Gastrocnemius medialis (tissue), 4 donors: ENCODE measurements at regions of chr5 and their contacts with region 1.

Region 1: DNA sequence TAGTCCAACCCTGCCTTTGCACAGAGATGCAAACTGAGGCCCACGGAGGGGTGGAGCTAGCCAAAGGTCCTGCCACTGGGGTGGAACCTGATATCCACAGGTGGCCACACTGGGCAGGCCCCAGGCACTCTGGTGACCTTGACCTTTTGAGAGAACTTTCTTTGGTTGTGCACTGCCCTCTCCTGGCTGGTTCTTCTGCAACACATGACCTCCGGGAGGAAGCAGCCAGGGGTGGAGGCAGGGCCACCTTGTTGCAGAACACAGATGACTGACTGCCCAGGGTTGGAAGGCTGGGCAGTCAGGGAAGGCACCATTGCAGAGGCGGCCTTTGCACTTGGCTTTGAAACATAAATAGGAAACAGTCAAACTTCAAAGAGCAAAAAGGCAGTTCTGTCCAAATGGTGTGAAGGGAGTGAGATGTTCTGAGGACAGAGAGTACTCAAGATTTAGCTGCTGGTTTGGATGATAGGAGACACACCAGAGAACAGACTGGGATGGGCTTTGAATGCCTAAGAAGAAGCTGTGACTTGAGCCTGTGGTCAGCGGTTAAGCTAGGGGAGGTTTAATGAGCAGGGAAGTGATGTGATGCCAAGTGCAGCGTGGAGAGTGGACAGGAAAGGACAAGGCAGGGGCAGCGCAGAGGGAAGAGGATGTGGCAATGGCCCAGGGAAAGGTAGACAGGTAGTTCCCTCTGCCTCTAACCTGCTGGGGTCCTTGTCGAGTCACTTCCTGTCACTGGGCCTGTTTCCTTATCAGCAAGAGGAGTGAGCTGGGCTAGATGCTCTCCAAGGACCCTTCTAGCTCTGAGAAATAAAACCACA is 6.8 kb upstream of the TCOF1 start:
- DNase-seq: peak; percentile 64 to 92
- ATAC-seq: peak; percentile 92 to 99
- H3K4me3 ChIP-seq: no peak overlapping the region
- H3K27ac ChIP-seq: peak overlapping the region in 2 of 4 donors; percentile 8 to 44
- H3K4me1 ChIP-seq: peaks cover 5 to 6% of the 10 kb centered on the region in 2 donors
- H3K27me3 ChIP-seq: no peaks in the 10 kb centered on the region
- CTCF ChIP-seq: peak; percentile 43 to 68 (median 58)
- POLR2A ChIP-seq: no peak

Region 2: GRCh38 chr5:150058480-150059126 is 292.1 kb before region 1 on chr5:
- in situ Hi-C with region 1: no loop called
- intact Hi-C with region 1: no loop called
- DNase-seq: peak in 1 of 2 donors; percentile 21
- ATAC-seq: peak in 1 of 2 donors; percentile 42
- H3K4me3 ChIP-seq: no peak overlapping the region
- H3K27ac ChIP-seq: no peak overlapping the region
- H3K4me1 ChIP-seq: no peaks in the 10 kb centered on the region
- H3K27me3 ChIP-seq: no peaks in the 10 kb centered on the region
- CTCF ChIP-seq: no peak
- POLR2A ChIP-seq: no peak

Region 3: DNA sequence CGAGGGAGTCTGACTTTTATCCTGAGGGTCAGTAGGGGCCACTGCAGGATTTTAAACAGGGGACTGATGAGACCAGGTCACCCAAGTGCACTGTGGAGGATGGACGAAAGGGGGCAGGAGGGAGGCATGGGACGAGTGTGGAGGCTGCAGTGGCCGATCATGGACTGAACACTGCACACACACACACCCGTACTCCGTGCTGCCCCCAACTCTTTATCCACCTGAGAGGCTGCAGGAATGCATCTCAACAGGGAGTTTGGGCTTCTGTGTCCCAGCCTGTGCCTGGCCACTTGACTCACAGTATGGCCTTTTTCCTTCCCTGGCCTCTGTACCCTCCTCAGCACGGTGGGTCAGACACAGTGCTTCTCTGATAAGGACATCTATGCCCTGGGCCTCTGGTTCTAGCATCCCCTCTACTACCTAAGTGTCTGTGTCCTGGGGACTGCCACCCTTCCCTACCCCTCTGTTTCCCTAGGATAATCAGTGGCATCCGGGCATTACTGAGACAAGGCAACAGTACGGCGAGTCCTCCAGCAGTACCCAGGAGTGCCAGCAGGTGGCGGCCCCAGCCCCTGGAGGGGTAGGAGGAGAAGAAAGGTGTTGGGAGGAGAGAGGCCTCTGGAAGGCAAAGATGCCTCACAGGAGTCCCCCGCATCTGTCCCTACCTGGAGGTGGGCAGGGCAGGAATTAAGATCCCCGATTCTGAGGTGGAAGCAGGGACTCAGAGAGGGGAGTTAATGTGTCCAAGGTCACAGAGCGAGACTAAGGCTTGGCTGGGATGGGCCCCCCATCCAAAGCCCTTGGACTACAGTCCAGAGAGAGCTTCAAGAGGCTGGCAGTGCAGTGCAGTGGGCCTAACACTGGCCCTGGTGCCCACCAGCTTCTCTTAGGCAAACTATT is 189.2 kb before region 1 on chr5:
- in situ Hi-C with region 1: no loop called
- intact Hi-C with region 1: loop called (anchors 2 kb)
- DNase-seq: peak; percentile 58 to 82
- ATAC-seq: peak; percentile 60 to 83
- H3K4me3 ChIP-seq: no peak overlapping the region
- H3K27ac ChIP-seq: peak overlapping the region; percentile 76 to 84 (median 82)
- H3K4me1 ChIP-seq: peaks cover 20 to 25% of the 10 kb centered on the region in 2 donors
- H3K27me3 ChIP-seq: no peaks in the 10 kb centered on the region
- CTCF ChIP-seq: peak; percentile 95 to 98 (median 97)
- POLR2A ChIP-seq: no peak

Region 4: DNA sequence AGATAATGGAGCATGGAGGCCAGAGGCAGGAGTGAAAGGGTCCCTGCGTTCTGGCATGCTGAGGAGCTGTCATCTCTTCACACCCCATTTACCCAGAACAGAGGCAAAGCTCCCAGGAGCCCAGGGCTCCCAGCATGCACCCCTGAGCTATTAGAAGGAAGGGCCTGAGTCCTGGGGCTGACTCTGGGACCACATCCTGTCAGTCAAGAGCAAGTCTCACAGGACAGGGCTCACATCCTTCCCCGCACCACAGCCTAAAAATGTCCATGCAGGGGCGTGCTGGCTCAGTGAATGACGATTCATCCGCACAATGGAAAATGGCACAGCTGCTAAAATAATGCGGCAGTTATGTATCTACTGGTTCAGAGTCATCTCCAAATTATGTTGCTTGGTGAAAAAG is 92.6 kb before region 1 on chr5:
- in situ Hi-C with region 1: no loop called
- intact Hi-C with region 1: loop called (anchors 5 kb)
- DNase-seq: no peak
- ATAC-seq: no peak
- H3K4me3 ChIP-seq: no peak overlapping the region
- H3K27ac ChIP-seq: no peak overlapping the region
- H3K4me1 ChIP-seq: peaks cover 0 to under 1% of the 10 kb centered on the region in 2 donors
- H3K27me3 ChIP-seq: no peaks in the 10 kb centered on the region
- CTCF ChIP-seq: no peak
- POLR2A ChIP-seq: no peak

Region 5: GRCh38 chr5:150272526-150272925 is 78.2 kb before region 1 on chr5:
- in situ Hi-C with region 1: no loop called
- intact Hi-C with region 1: loop called (anchors 2 kb)
- DNase-seq: no peak
- ATAC-seq: no peak
- H3K4me3 ChIP-seq: no peak overlapping the region
- H3K27ac ChIP-seq: no peak overlapping the region
- H3K4me1 ChIP-seq: peaks cover 13 to 15% of the 10 kb centered on the region in 2 donors
- H3K27me3 ChIP-seq: no peaks in the 10 kb centered on the region
- CTCF ChIP-seq: peak in 1 of 5 experiments; percentile 18
- POLR2A ChIP-seq: no peak